HepG2 (cell line): ENCODE measurements at regions of chr13 and their contacts with region 1.

Region 1: DNA sequence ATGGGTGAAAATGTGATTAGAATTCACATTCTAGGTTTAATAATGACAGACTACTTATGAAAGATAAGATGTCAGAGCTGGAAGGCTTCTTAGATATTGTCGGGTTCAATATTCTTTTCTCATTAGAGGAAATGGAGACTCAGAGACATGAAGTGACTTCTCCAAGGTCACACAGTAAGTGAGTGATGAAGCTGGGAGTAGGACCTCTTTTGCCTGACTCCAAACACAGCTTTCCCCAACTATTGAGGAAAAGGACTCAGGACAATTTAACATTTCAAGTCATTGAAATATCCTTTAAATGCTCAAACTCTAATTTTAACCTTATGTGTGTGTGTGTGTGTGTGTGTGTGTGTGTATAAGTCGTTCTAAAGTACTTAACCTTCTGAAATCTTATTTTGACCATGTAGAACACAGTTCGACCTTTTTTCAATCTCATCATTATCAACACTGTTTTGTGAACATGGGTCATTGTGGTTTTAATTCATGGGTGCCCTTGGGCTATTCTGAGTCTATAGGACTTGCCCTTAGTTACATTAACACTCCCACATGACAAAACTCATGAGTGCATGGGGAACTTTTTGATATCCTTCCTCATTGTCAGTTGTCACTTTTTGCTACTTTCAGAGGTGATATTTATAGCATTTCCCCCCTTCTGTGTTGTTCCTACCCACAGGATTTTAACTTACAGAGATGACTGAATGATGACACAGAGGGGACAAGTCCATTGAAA is 53.0 kb downstream of the LRCH1 start:
- DNase-seq: no peak
- ATAC-seq: no peak
- H3K4me3 ChIP-seq: no peak overlapping the region
- H3K27ac ChIP-seq: no peak overlapping the region
- H3K4me1 ChIP-seq: peaks cover 90% of the 10 kb centered on the region
- H3K27me3 ChIP-seq: no peaks in the 10 kb centered on the region
- CTCF ChIP-seq: no peak
- EP300 ChIP-seq: no peak
- POLR2A ChIP-seq: no peak
- RAD21 ChIP-seq: no peak

Region 2: GRCh38 chr13:46622630-46623256 is 16.8 kb after region 1 on chr13:
- CTCF ChIA-PET with region 1: no interaction called
- POLR2A ChIA-PET with region 1: no interaction called
- in situ Hi-C with region 1: no loop called
- intact Hi-C with region 1: loop called (anchors 2 kb)
- DNase-seq: no peak
- ATAC-seq: no peak
- H3K4me3 ChIP-seq: no peak overlapping the region
- H3K27ac ChIP-seq: no peak overlapping the region
- H3K4me1 ChIP-seq: peaks cover 49% of the 10 kb centered on the region
- H3K27me3 ChIP-seq: no peaks in the 10 kb centered on the region
- CTCF ChIP-seq: no peak
- EP300 ChIP-seq: no peak
- POLR2A ChIP-seq: no peak
- RAD21 ChIP-seq: no peak

Region 3: DNA sequence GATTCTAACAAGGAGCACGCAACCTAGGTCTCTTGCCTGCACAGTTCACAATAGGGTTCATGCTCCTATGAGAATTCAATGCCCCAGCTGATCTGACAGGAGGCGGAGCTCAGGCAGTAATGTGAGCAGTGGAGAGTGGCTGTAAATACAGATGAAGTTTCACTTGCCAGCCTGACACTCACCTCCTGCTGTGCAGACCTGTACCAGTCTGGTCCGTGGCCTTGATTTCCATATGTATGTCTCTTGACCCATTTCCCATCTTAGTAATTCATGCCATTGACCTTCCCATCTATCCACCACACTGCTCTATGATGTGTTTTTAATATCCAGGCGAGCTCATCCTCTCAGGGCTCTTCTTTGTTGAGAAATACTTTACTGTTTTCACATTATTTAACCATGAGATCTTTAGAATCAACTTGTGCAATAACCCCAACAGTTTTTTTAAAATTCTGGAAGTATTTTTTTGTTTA is 42.2 kb after region 1 on chr13:
- CTCF ChIA-PET with region 1: no interaction called
- POLR2A ChIA-PET with region 1: no interaction called
- in situ Hi-C with region 1: no loop called
- intact Hi-C with region 1: loop called (anchors 5 kb)
- DNase-seq: peak; percentile 53
- ATAC-seq: peak; percentile 92
- H3K4me3 ChIP-seq: no peak overlapping the region
- H3K27ac ChIP-seq: no peak overlapping the region
- H3K4me1 ChIP-seq: peaks cover 21% of the 10 kb centered on the region
- H3K27me3 ChIP-seq: no peaks in the 10 kb centered on the region
- CTCF ChIP-seq: no peak
- EP300 ChIP-seq: no peak
- POLR2A ChIP-seq: no peak
- RAD21 ChIP-seq: no peak

Region 4: DNA sequence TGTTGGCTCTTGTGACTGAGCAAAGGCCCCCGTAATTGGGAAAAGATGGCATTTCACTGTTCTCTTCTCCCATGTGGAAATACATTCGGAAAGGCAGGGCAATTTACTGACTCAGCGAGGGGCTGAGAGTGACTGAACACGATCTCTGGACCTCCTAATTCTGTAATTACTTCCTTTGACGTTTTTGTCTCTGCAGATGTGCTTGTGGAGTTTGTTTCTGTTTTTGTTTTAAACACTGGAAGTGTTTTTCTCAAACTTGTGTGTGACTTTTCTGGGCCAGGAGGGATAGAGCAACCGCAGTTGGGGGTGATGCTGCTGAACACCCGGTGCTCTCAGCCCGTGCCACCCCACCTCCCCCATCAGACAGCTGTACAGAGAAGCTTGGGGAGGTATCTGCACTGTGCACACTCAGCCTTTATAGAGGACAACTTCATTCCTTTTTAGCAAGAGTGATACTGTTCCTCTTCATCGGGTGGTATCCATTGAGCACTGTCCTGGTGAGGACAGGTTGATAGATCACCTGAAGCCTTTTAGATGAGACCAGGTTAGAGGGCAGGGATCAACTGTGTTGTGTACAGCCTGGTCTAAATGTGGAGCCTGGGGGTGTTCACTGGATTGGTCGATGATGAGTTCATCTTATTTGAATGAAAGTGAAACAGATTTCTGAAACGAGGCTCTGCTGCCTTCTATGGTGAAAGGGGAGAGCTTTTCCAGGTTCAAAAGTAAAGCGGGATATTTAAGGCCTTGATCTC is 73.6 kb after region 1 on chr13:
- CTCF ChIA-PET with region 1: no interaction called
- POLR2A ChIA-PET with region 1: no interaction called
- in situ Hi-C with region 1: no loop called
- intact Hi-C with region 1: loop called (anchors 5 kb)
- DNase-seq: peak; percentile 9
- ATAC-seq: peak; percentile 55
- H3K4me3 ChIP-seq: no peak overlapping the region
- H3K27ac ChIP-seq: no peak overlapping the region
- H3K4me1 ChIP-seq: peaks cover 83% of the 10 kb centered on the region
- H3K27me3 ChIP-seq: no peaks in the 10 kb centered on the region
- CTCF ChIP-seq: no peak
- EP300 ChIP-seq: no peak
- POLR2A ChIP-seq: no peak
- RAD21 ChIP-seq: no peak